Mammary epithelial cell (primary cell): ENCODE measurements at regions of chr1 and their contacts with region 1.

Region 1: DNA sequence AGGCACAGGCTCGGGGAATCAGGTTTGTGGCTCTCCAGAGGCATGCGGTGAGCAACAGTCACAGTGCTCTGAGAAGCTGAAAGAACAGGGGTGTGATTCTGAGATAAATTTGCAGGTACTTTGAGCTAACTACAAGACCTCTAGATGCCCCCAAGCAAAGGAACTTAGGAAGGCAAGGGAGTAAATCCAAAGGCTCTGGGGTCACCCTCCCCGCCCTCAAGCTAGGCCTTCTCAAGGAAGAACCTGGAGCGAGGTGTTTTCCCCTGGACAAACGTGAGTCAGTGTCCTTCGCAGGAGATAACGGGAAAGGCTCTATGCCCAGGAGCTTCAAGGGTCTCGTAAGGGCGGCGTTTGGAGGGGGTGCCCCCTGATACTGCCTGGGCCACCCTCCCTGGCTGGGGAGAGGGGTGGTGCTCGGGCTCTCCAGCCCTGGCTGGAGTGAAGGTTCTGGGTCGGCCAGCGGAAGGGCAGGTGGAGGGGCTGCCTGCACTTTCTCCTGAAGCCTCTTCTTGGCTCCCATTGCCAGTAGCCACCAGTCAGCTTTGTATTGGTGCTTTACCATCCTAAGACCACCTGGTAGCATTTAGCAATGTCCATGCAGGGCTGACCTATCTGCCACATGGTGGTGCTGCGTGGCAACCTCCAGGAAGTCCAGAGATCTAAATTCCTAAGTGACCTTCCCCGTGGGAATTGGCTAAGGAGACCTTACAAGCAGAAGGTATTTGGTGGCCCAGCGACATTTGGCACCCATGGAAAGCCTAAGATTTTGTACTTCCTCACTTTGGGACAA is 44.0 kb downstream of the GPR161 start:
- DNase-seq: no peak
- H3K4me3 ChIP-seq: no peak overlapping the region
- H3K27ac ChIP-seq: no peak overlapping the region
- H3K4me1 ChIP-seq: no peaks in the 10 kb centered on the region
- H3K27me3 ChIP-seq: no peaks in the 10 kb centered on the region
- CTCF ChIP-seq: peak; percentile 18 to 43

Region 2: DNA sequence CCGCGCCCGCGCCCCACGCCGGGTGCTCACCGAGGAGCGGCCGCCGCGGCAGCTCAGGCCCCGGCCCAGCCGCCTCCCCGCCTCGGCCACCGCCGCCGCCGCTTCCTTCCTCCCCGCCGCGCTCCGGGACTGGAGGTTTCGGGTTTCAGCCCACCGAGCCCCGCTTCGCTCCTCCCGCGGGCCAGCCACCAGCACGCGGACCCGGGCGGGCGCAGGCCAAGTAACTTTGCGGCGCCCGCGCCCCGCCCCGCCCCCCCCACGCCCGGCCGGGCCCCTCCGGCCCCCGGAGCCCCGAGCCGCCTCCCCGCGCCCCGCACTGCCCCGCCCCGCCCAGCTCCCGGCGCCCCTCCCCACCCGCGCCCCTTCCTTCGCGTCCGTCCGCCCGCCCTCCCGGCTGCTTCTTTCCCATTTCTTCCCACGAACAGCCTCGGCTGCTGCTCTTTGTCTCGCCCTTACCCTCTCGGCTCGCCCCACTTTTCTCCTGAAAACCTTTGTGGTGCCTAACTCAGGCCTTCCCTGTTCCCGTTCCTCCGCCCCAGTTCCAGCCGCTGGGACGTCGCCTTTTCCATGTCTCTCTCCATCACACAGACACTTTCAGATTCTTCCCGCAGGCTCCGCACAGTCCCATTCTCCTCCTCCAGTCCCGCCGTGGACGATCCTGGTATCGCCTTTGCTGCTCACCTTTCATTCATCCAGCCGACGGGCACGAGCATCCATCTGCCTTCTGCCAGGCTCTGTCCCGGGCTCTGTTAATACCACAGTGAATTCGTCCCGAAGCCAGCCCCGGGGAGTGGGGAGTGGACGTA is 44.2 kb after region 1 on chr1 and contains the start of gene GPR161:
- CTCF ChIA-PET with region 1: no interaction called
- dilution Hi-C with region 1: no loop called
- in situ Hi-C with region 1: no loop called
- intact Hi-C with region 1: loop called (anchors 2 kb)
- DNase-seq: peak; percentile 57
- H3K4me3 ChIP-seq: peak within 1 kb of the TSS; percentile 46 to 73 (median 67)
- H3K27ac ChIP-seq: peak within 1 kb of the TSS; percentile 1
- H3K4me1 ChIP-seq: peaks cover 3% of the 10 kb centered on the region
- H3K27me3 ChIP-seq: no peaks in the 10 kb centered on the region
- CTCF ChIP-seq: no peak
- total RNA-seq, gene GPR161: 15.0 to 27.1 TPM

Region 3: GRCh38 chr1:168145184-168146159 is 52.7 kb after region 1 on chr1:
- CTCF ChIA-PET with region 1: interaction called, 4 read pairs
- dilution Hi-C with region 1: no loop called
- in situ Hi-C with region 1: no loop called
- intact Hi-C with region 1: loop called (anchors 2 kb)
- DNase-seq: peak; percentile 69
- H3K4me3 ChIP-seq: no peak overlapping the region
- H3K27ac ChIP-seq: no peak overlapping the region
- H3K4me1 ChIP-seq: no peaks in the 10 kb centered on the region
- H3K27me3 ChIP-seq: no peaks in the 10 kb centered on the region
- CTCF ChIP-seq: peak; percentile 98 to 99

Region 4: DNA sequence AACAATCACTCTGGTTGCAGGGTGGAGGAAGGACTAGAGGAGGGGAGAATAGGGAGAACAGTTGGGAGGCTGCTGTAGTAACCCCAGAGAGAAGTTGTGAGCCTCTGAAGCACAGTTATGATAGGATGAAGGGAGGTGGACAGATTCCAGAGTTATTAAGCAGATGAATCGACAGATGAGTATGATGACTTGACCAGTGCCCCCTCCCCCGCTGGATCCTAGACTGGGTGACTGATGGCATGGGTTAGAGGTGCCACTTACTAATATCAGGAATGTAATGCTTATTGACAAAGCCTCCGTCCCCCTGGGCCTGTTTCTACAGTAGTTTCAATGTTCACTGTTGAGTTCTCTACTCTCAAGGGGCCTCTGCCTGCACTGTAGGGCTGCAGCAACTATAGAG is 72.0 kb after region 1 on chr1:
- CTCF ChIA-PET with region 1: no interaction called
- dilution Hi-C with region 1: loop called (anchors 5 kb)
- in situ Hi-C with region 1: no loop called
- intact Hi-C with region 1: no loop called
- DNase-seq: no peak
- H3K4me3 ChIP-seq: no peak overlapping the region
- H3K27ac ChIP-seq: no peak overlapping the region
- H3K4me1 ChIP-seq: no peaks in the 10 kb centered on the region
- H3K27me3 ChIP-seq: no peaks in the 10 kb centered on the region
- CTCF ChIP-seq: no peak

Region 5: DNA sequence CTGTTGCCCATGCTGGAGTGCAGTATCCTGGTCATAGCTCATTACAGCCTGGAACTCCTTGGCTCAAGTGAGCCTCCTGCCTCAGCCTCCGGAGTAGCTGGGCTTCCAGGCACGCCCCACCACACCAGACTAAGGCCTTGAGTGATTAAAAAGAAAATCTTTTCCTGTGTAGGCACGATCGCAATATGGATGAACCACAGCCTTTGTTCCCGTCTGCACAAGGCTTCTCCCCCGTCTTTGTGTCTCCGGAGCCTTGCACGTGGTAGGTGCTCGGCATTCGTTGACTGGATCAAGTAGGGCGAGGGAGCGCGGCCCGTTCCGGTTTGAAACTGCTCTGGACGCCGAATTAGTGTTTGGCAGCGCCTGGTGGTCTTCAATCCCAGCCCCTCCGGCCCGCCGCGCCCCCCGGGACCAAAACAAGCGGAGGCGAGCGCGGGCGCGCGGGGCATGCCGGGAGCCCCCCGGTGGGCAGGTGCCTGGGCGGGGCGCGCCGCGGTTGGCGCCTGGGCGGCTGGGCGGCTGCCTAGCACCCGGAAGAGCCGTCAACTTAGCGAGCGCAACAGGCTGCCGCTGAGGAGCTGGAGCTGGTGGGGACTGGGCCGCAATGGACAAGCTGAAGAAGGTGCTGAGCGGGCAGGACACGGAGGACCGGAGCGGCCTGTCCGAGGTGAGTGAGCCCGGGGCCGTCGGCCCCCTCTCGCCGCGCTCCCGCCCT is 132.9 kb after region 1 on chr1 and contains the start of gene SFT2D2:
- CTCF ChIA-PET with region 1: no interaction called
- dilution Hi-C with region 1: no loop called
- in situ Hi-C with region 1: no loop called
- intact Hi-C with region 1: loop called (anchors 2 kb)
- DNase-seq: peak; percentile 82
- H3K4me3 ChIP-seq: peak within 1 kb of the TSS; percentile 75 to 88 (median 82)
- H3K27ac ChIP-seq: peak within 1 kb of the TSS; percentile 78
- H3K4me1 ChIP-seq: peaks cover 30% of the 10 kb centered on the region
- H3K27me3 ChIP-seq: no peaks in the 10 kb centered on the region
- CTCF ChIP-seq: no peak
- total RNA-seq, gene SFT2D2: 47.3 to 56.6 TPM

Region 6: DNA sequence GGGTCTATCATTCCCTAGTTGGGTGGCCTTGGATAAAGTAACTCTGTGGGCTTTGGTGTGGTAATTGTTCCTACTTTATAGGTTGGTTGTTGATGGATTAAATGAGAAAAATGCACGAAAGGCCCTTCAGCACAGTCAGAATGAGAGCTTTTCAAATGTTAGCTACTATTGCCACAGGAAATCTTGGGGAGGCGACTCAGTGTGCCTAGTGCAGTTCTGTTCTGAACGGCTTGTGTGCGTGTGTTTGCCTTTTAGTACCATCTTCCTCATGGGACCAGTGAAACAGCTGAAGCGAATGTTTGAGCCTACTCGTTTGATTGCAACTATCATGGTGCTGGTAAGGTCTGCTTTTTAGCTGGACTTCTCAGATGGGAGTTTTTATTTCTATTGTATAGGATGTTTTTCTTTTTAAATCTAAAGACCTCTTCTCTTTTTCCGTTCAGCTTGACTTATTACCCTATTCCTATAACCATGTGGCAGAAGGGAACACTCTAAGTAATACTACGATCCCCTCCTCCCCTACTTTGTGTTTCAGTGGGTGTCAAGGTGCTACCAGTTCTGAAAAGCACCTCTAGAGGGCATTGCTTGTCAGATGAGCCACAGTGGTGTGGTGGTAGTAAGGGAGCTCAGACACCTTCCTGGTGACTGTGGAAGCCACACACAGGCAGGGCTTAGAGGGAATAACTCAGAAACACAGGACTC is 142.2 kb after region 1 on chr1:
- CTCF ChIA-PET with region 1: no interaction called
- dilution Hi-C with region 1: no loop called
- in situ Hi-C with region 1: no loop called
- intact Hi-C with region 1: loop called (anchors 1 kb)
- DNase-seq: peak; percentile 62
- H3K4me3 ChIP-seq: no peak overlapping the region
- H3K27ac ChIP-seq: no peak overlapping the region
- H3K4me1 ChIP-seq: peaks cover 2% of the 10 kb centered on the region
- H3K27me3 ChIP-seq: no peaks in the 10 kb centered on the region
- CTCF ChIP-seq: peak; percentile 83 to 89

Region 7: DNA sequence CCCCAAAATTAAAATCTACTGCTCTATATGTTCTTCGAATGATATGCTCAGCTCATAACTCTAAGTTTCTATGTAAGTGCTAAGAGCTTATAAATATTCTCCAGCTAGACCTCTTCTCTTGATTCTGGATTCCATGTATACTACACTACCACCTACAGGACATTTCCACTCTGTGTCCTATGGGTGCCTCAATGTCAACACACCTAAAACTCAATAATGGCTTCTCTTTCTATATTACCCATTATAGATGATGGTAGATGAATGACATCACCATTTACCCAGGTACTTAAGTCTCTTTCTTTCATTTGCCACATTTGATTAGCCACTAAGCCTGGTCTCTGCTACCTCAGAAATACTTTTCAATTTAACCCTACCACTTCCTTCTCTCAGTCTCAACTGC is 229.2 kb after region 1 on chr1:
- CTCF ChIA-PET with region 1: no interaction called
- dilution Hi-C with region 1: no loop called
- in situ Hi-C with region 1: loop called in 1 of 2 experiments (anchors 25 kb)
- intact Hi-C with region 1: loop called (anchors 1 kb)
- DNase-seq: peak; percentile 57
- H3K4me3 ChIP-seq: no peak overlapping the region
- H3K27ac ChIP-seq: no peak overlapping the region
- H3K4me1 ChIP-seq: peaks cover 15% of the 10 kb centered on the region
- H3K27me3 ChIP-seq: no peaks in the 10 kb centered on the region
- CTCF ChIP-seq: peak; percentile 51 to 67